ENCODE measurements at regions of chr17 and their contacts with region 1.

Region 1: DNA sequence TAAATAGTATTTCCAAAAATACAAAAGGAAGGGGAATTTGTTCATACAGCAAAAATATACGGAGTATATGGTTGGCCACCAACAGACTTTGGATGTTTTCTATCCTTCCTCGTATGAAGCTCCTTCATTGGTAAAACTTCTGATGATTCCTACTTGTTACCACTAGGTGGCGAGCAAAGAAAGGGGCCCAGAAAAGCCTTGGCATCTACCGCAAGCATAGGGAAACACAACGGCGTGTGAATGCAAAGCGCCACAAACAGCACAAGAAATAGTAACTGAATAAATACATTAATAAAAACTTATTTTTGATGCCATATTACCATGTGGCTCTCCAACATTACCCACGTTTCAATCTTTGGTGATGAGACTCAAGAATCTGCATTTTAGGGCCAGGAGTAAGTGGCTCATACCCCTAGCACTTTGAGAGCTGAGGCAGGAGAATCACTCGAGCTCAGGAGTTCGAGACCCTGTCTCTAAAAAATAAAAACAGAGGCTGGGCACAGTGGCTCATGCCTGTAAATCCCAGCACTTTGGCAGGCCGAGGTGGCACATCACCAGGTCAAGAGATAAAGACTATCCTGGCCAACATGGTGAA is 34.5 kb downstream of the YWHAE start:
- DNase-seq: peak; percentile 65 to 75
- H3K4me3 ChIP-seq: no peak overlapping the region
- H3K4me3 Mint-ChIP-seq: no peak overlapping the region
- H3K27ac Mint-ChIP-seq: no peak overlapping the region
- H3K4me1 ChIP-seq: no peaks in the 10 kb centered on the region; the same call in 1 of the 2 replicates
- H3K4me1 Mint-ChIP-seq: peaks cover 12% of the 10 kb centered on the region
- H3K27me3 ChIP-seq: no peaks in the 10 kb centered on the region
- H3K27me3 Mint-ChIP-seq: no peaks in the 10 kb centered on the region
- CTCF ChIP-seq: peak; percentile 84 to 88

Region 2: GRCh38 chr17:1390433-1391367 is 25.2 kb after region 1 on chr17:
- CTCF ChIA-PET with region 1: interaction called, 10 read pairs
- POLR2A ChIA-PET with region 1: no interaction called
- intact Hi-C with region 1: no loop called
- DNase-seq: peak in 1 of 2 experiments; percentile 68
- H3K4me3 ChIP-seq: no peak overlapping the region
- H3K4me3 Mint-ChIP-seq: peak overlapping the region; percentile 12
- H3K27ac Mint-ChIP-seq: peak overlapping the region; percentile 25
- H3K4me1 ChIP-seq: peaks cover 57% of the 10 kb centered on the region
- H3K4me1 Mint-ChIP-seq: peaks cover 30% of the 10 kb centered on the region
- H3K27me3 ChIP-seq: no peaks in the 10 kb centered on the region
- H3K27me3 Mint-ChIP-seq: no peaks in the 10 kb centered on the region
- CTCF ChIP-seq: no peak

Region 3: DNA sequence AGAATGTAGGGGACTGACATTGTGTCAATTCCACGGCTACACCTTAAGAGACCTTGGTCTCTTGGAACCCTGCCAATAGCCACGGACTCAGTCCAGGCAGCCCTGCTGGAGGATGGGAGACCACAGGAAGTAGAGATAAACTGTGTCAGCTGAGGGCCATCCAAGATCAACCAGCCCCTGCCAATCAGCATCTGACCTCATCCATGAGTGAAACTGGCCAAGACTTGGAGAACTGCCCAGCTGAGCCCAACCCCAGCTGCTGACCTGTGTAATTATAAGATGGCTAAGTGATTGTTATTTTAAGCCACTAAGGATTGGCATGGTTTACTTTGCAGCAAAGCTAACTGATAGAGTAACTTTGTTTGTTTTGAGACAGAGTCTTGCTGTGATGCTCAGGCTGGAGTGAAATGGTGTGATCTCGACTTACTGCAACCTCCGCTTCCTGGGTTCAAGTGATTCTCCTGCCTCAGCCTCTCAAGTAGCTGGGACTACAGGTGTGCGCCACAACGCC is 47.8 kb after region 1 on chr17:
- CTCF ChIA-PET with region 1: no interaction called
- POLR2A ChIA-PET with region 1: no interaction called
- intact Hi-C with region 1: loop called (anchors 10 kb)
- DNase-seq: no peak
- H3K4me3 ChIP-seq: no peak overlapping the region
- H3K4me3 Mint-ChIP-seq: no peak overlapping the region
- H3K27ac Mint-ChIP-seq: no peak overlapping the region
- H3K4me1 ChIP-seq: peaks cover 6% of the 10 kb centered on the region; the same call in 1 of the 2 replicates
- H3K4me1 Mint-ChIP-seq: peaks cover 9% of the 10 kb centered on the region
- H3K27me3 ChIP-seq: no peaks in the 10 kb centered on the region
- H3K27me3 Mint-ChIP-seq: no peaks in the 10 kb centered on the region
- CTCF ChIP-seq: no peak

Region 4: GRCh38 chr17:1455797-1456599 is 90.5 kb after region 1 on chr17 and contains the start of gene CRK:
- CTCF ChIA-PET with region 1: interaction called, 6 read pairs
- POLR2A ChIA-PET with region 1: no interaction called
- intact Hi-C with region 1: loop called (anchors 1 kb)
- DNase-seq: peak; percentile 96 to 99
- H3K4me3 ChIP-seq: peak within 1 kb of the TSS; percentile 99
- H3K4me3 Mint-ChIP-seq: peak within 1 kb of the TSS; percentile 93
- H3K27ac Mint-ChIP-seq: peak within 1 kb of the TSS; percentile 94
- H3K4me1 ChIP-seq: peaks cover 9% of the 10 kb centered on the region; the same call in 1 of the 2 replicates
- H3K4me1 Mint-ChIP-seq: peaks cover 13% of the 10 kb centered on the region
- H3K27me3 ChIP-seq: no peaks in the 10 kb centered on the region
- H3K27me3 Mint-ChIP-seq: no peaks in the 10 kb centered on the region
- CTCF ChIP-seq: no peak
- total RNA-seq, gene CRK: 70.0 and 72.3 TPM in 2 replicates